ENCODE measurements at regions of chr6 and their contacts with region 1.

Region 1: GRCh38 chr6:106702451-106703110 is 73.2 kb downstream of the QRSL1 start:
- DNase-seq: peak; percentile 67 to 86 (median 78)
- ATAC-seq: peak; percentile 84 to 94 (median 88)
- H3K4me3 ChIP-seq: peak overlapping the region in 2 of 3 donors; percentile 39 to 47
- H3K27ac ChIP-seq: peak overlapping the region; percentile 85 to 99 (median 98)
- H3K4me1 ChIP-seq: peaks cover 0 to 32% (median 7%) of the 10 kb centered on the region in 4 donors
- H3K27me3 ChIP-seq: no peaks in the 10 kb centered on the region
- CTCF ChIP-seq: no peak
- POLR2A ChIP-seq: peak; percentile 86

Region 2: GRCh38 chr6:106731144-106731842 is 28.7 kb after region 1 on chr6:
- intact Hi-C with region 1: loop called in 1 of 2 experiments (anchors 2 kb)
- DNase-seq: peak; percentile 75 to 93 (median 89)
- ATAC-seq: peak; percentile 74 to 89 (median 82)
- H3K4me3 ChIP-seq: no peak overlapping the region
- H3K27ac ChIP-seq: peak overlapping the region; percentile 76 to 91 (median 91)
- H3K4me1 ChIP-seq: peaks cover 0 to 58% (median 27%) of the 10 kb centered on the region in 4 donors
- H3K27me3 ChIP-seq: no peaks in the 10 kb centered on the region
- CTCF ChIP-seq: no peak
- POLR2A ChIP-seq: peak; percentile 41